CD8-positive, alpha-beta T cell (primary cell): ENCODE measurements at regions of chr15 and their contacts with region 1.

Region 1: DNA sequence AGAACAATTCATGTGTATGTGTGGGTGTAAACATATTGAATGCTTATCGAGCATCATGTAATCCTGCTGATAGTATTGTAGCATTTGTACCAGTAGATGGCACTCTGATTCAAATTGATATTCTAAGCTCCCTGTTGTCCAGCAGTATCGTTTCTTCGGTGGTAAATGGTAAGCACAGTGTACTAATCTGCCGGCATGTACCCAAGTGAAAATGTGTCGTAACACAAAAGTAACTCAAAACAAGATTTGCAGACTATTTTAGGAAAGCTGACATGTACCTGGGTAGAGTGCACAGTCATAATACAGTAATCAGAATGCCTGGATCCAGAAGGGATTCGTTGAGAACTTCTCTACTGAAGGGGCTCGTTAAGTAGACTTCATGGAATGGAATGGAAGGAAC is 31.7 kb upstream of the MNS1 start:
- DNase-seq: peak in 2 of 9 experiments; percentile 55 to 67
- ATAC-seq: no peak
- H3K4me3 ChIP-seq: no peak overlapping the region
- H3K4me3 Mint-ChIP-seq: no peak overlapping the region
- H3K27ac ChIP-seq: no peak overlapping the region
- H3K27ac Mint-ChIP-seq: no peak overlapping the region
- H3K4me1 ChIP-seq: no peaks in the 10 kb centered on the region
- H3K4me1 Mint-ChIP-seq: peaks cover 2% of the 10 kb centered on the region
- H3K27me3 ChIP-seq: no peaks in the 10 kb centered on the region
- H3K27me3 Mint-ChIP-seq: peaks cover 8% of the 10 kb centered on the region
- CTCF ChIP-seq: peak; percentile 75

Region 2: DNA sequence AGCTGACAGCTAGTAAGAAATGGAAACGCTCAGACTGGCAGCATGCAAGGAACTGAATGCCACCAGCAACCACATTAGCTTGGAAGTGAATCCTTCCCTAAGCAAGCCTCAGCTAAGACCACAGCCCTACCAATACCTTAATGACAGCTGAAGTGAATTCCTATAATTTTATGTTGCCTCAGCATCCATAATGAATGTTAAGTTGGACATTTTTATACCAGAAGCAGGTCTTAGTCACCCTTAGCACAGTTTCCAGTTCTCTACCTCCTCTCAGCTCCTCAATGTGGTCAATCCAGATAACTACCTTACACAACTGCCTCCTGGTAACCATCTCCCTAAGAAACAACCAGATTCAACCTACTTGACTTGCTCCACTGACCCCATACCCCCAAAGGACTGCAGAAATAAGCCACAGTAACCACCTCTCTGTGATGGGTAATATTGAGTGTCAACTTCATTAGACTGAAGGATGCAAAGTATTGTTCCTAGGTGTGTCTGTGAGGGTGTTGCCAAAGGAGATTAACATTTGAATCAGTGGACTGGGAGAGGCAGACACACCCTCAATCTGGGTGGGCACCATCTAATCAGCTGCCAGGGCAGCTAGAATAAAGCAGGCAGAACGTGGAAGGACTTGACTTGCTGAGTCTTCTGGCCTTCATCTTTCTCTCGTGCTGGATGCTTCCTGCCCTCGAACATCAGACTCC is 536.7 kb before region 1 on chr15:
- CTCF ChIA-PET with region 1: no interaction called
- POLR2A ChIA-PET with region 1: no interaction called
- intact Hi-C with region 1: no loop called
- DNase-seq: no peak
- ATAC-seq: no peak
- H3K4me3 ChIP-seq: no peak overlapping the region
- H3K4me3 Mint-ChIP-seq: no peak overlapping the region
- H3K27ac ChIP-seq: no peak overlapping the region
- H3K27ac Mint-ChIP-seq: peak overlapping the region; percentile 5
- H3K4me1 ChIP-seq: no peaks in the 10 kb centered on the region
- H3K4me1 Mint-ChIP-seq: no peaks in the 10 kb centered on the region
- H3K27me3 ChIP-seq: no peaks in the 10 kb centered on the region
- H3K27me3 Mint-ChIP-seq: no peaks in the 10 kb centered on the region
- CTCF ChIP-seq: no peak

Region 3: GRCh38 chr15:56337084-56337725 is 159.4 kb before region 1 on chr15:
- CTCF ChIA-PET with region 1: no interaction called
- POLR2A ChIA-PET with region 1: no interaction called
- intact Hi-C with region 1: no loop called
- DNase-seq: no peak
- ATAC-seq: no peak
- H3K4me3 ChIP-seq: no peak overlapping the region
- H3K4me3 Mint-ChIP-seq: no peak overlapping the region
- H3K27ac ChIP-seq: no peak overlapping the region
- H3K27ac Mint-ChIP-seq: no peak overlapping the region
- H3K4me1 ChIP-seq: no peaks in the 10 kb centered on the region
- H3K4me1 Mint-ChIP-seq: no peaks in the 10 kb centered on the region
- H3K27me3 ChIP-seq: no peaks in the 10 kb centered on the region
- H3K27me3 Mint-ChIP-seq: peaks cover 2% of the 10 kb centered on the region
- CTCF ChIP-seq: no peak

Region 4: GRCh38 chr15:56411122-56411749 is 85.4 kb before region 1 on chr15:
- CTCF ChIA-PET with region 1: no interaction called
- POLR2A ChIA-PET with region 1: no interaction called
- intact Hi-C with region 1: no loop called
- DNase-seq: no peak
- ATAC-seq: no peak
- H3K4me3 ChIP-seq: no peak overlapping the region
- H3K4me3 Mint-ChIP-seq: no peak overlapping the region
- H3K27ac ChIP-seq: no peak overlapping the region
- H3K27ac Mint-ChIP-seq: no peak overlapping the region
- H3K4me1 ChIP-seq: no peaks in the 10 kb centered on the region
- H3K4me1 Mint-ChIP-seq: no peaks in the 10 kb centered on the region
- H3K27me3 ChIP-seq: no peaks in the 10 kb centered on the region
- H3K27me3 Mint-ChIP-seq: no peaks in the 10 kb centered on the region
- CTCF ChIP-seq: no peak

Region 5: DNA sequence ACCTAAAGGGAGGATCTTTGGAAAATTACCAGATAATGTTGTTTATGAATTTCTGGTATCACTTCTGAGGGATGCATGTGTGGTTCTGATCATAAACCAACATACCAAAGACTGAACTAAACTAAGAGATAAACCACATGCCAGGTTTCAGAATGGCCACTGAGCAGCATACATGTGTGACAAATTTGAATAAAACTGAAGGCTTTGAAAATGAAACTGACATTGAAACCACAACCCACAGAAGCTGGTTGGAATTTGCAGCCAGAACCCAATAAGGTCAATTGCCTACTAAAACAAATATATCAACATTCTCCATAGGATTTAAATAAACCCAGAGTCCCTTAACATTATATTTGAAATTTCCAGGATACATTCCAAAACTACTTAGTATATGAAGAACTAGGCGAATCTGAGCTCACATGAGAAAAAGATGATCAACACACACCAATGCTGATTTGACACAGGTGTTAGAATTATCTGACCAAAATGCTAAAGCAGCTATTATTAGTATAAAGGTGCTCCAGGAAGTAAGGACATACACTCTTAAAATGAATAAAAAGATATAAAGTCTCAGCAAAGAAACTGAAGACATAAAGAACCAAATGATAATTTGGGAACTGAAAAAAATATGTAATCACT is 111.6 kb after region 1 on chr15:
- CTCF ChIA-PET with region 1: no interaction called
- POLR2A ChIA-PET with region 1: no interaction called
- intact Hi-C with region 1: loop called in 1 of 2 experiments (anchors 5 kb)
- DNase-seq: peak in 1 of 9 experiments; percentile 15
- ATAC-seq: no peak
- H3K4me3 ChIP-seq: no peak overlapping the region
- H3K4me3 Mint-ChIP-seq: no peak overlapping the region
- H3K27ac ChIP-seq: no peak overlapping the region
- H3K27ac Mint-ChIP-seq: no peak overlapping the region
- H3K4me1 ChIP-seq: no peaks in the 10 kb centered on the region
- H3K4me1 Mint-ChIP-seq: peaks cover 8% of the 10 kb centered on the region
- H3K27me3 ChIP-seq: no peaks in the 10 kb centered on the region
- H3K27me3 Mint-ChIP-seq: peaks cover 6% of the 10 kb centered on the region
- CTCF ChIP-seq: no peak

Region 6: DNA sequence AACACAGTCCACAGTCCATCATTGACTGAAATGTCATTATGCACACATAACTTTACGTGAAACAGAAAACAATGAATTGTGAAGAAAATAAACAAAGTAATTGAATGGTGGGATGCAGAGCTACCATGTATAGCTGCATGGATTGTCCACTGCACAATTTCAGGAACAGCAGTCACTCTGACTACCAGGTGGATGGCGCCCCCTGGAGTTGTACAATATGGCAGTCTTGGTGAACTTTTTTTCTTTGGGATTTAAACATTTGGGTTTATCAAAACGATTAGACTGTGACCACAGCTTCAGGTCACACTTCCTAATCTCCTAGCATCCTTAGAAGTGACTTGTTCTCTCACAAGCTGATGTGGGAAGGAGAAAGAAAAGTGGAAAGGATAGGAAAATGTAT is 372.9 kb after region 1 on chr15:
- CTCF ChIA-PET with region 1: interaction called, 3 read pairs
- POLR2A ChIA-PET with region 1: no interaction called
- intact Hi-C with region 1: loop called in 1 of 2 experiments (anchors 5 kb)
- DNase-seq: peak in 3 of 9 experiments; percentile 10 to 18 (median 10)
- ATAC-seq: no peak
- H3K4me3 ChIP-seq: no peak overlapping the region
- H3K4me3 Mint-ChIP-seq: no peak overlapping the region
- H3K27ac ChIP-seq: no peak overlapping the region
- H3K27ac Mint-ChIP-seq: no peak overlapping the region
- H3K4me1 ChIP-seq: no peaks in the 10 kb centered on the region
- H3K4me1 Mint-ChIP-seq: no peaks in the 10 kb centered on the region
- H3K27me3 ChIP-seq: no peaks in the 10 kb centered on the region
- H3K27me3 Mint-ChIP-seq: no peaks in the 10 kb centered on the region
- CTCF ChIP-seq: peak; percentile 20

Region 7: DNA sequence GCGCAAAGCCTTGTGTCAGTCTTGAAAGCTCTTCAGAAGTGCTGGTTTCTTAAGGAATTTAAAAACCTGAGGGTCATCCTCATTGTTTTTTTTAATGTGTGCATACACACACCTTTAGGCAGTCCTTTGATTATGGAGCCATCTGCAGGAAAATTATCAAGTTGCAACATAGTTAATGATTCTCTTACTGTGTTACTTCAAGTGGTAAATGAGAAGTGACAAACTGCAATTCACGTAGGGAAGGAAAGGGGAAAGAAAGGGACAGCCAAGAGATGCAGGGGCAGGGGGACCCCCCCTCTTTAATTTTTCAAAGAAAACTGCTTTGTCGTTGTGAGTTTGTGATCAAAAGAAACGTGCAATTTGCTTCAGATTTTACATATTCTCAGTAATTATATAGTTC is 717.2 kb after region 1 on chr15:
- CTCF ChIA-PET with region 1: interaction called, 6 read pairs
- POLR2A ChIA-PET with region 1: no interaction called
- intact Hi-C with region 1: loop called (anchors 1 to 5 kb)
- DNase-seq: peak in 2 of 9 experiments; percentile 28 to 44
- ATAC-seq: no peak
- H3K4me3 ChIP-seq: no peak overlapping the region
- H3K4me3 Mint-ChIP-seq: no peak overlapping the region
- H3K27ac ChIP-seq: no peak overlapping the region
- H3K27ac Mint-ChIP-seq: no peak overlapping the region
- H3K4me1 ChIP-seq: peaks cover 7% of the 10 kb centered on the region
- H3K4me1 Mint-ChIP-seq: peaks cover 28% of the 10 kb centered on the region
- H3K27me3 ChIP-seq: no peaks in the 10 kb centered on the region
- H3K27me3 Mint-ChIP-seq: no peaks in the 10 kb centered on the region
- CTCF ChIP-seq: peak; percentile 42

Region 8: GRCh38 chr15:57306161-57306943 is 809.7 kb after region 1 on chr15:
- CTCF ChIA-PET with region 1: interaction called, 21 read pairs
- POLR2A ChIA-PET with region 1: interaction called, 3 read pairs
- intact Hi-C with region 1: loop called (anchors 1 kb)
- DNase-seq: peak; percentile 64 to 90 (median 78)
- ATAC-seq: peak; percentile 75
- H3K4me3 ChIP-seq: peak overlapping the region; percentile 46 to 49
- H3K4me3 Mint-ChIP-seq: peak overlapping the region; percentile 67
- H3K27ac ChIP-seq: no peak overlapping the region
- H3K27ac Mint-ChIP-seq: no peak overlapping the region
- H3K4me1 ChIP-seq: no peaks in the 10 kb centered on the region
- H3K4me1 Mint-ChIP-seq: peaks cover 4% of the 10 kb centered on the region
- H3K27me3 ChIP-seq: peaks cover 0 to 4% of the 10 kb centered on the region in 2 experiments
- H3K27me3 Mint-ChIP-seq: peaks cover 9% of the 10 kb centered on the region
- CTCF ChIP-seq: peak; percentile 83

Region 9: DNA sequence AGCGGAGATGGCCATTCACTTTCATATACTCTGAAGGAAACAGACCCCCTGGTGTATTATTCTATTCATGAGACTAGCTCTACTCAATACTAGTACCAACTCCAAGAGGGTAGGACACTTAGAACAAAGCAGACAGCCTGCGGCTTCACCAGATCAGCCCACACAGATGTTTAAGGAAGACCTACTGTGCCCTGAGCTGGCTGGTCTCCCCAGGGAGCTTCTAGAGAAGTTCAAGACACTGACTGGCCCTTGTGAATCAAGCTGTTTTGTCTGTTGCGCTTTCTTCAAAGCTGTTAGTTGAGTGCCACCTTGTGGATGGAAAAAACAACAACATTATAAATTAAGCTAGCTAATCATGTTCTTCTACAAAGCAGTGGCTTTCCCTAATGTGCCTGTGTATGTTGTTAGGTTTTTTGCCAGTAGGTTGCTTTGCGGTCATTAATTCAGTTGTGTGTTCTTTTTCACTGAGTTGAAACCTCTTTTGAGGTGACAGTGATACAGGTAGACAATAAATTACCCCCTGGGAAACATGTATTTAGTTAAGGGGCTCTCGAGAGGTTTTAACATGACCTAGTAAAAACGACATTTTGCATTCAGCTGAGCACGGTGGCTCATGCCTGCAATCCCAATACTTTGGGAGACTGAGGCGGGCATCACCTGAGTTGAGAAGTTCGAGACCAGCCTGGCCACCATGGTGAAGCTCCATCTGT is 1030.9 kb after region 1 on chr15:
- CTCF ChIA-PET with region 1: interaction called, 8 read pairs
- POLR2A ChIA-PET with region 1: no interaction called
- intact Hi-C with region 1: loop called in 1 of 2 experiments (anchors 2 kb)
- DNase-seq: peak in 2 of 9 experiments; percentile 43 to 56
- ATAC-seq: no peak
- H3K4me3 ChIP-seq: no peak overlapping the region
- H3K4me3 Mint-ChIP-seq: no peak overlapping the region
- H3K27ac ChIP-seq: no peak overlapping the region
- H3K27ac Mint-ChIP-seq: no peak overlapping the region
- H3K4me1 ChIP-seq: no peaks in the 10 kb centered on the region
- H3K4me1 Mint-ChIP-seq: no peaks in the 10 kb centered on the region
- H3K27me3 ChIP-seq: no peaks in the 10 kb centered on the region
- H3K27me3 Mint-ChIP-seq: peaks cover 3% of the 10 kb centered on the region
- CTCF ChIP-seq: peak; percentile 56